ENCODE measurements at regions of chr10 and their contacts with region 1.

Region 1: DNA sequence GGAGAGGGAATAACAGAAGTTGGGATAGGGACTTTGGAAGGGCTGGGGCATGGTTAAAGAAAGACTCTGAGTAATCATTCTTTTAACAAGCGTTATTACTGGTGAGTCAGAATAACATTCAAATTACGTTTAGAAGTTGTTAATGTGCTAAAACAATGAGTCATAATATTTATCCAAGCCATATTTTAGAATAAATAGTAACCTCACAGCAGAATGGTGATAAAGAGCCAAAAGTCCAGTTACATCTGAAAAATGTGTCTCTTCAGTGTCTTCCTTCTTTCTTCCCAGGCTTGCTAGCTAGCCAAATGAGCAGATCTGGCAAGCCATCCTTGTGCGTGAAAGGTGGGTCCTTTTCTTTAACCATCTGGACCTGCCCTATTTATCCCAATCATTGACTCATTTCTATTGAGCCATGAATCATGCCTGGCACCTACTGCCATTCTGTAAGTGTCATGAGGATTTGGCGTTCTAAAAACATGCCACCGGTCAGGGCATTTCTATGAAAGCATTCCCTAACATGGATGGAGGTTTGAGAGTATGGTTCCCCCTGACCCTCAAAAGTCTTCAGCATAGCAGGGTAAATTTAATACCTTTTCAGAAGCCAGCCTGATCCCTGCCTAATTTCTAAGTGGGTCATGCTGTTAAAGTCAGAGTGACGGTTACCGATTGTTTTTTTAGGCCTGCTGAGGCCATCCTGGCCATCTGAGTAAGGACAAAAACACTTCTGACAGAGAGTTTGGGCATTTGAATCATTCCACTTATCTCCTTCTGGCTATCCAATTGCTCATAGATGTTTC is 26.8 kb downstream of the MYPN start:
- DNase-seq: no peak

Region 2: DNA sequence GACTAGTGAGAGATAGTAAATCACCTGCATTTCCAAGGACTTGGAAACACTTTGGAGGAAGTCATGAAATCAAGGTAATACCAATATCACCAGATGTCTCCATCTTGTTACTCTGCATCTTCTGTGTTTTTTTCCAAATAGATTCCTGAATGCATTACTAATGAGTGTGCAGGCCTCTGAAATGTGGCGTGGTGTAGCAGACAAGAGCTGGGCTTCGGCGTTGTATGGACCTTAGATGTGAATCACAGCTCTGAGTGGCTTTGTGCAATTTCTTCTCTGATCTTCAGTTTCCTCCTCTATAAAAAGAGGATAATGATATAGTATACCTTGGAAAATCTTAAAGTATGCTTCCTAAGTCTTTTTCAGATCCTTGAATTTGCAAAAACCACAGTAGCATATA is 36.4 kb before region 1 on chr10:
- intact Hi-C with region 1: loop called (anchors 5 kb)
- DNase-seq: no peak